ENCODE measurements at regions of chr6 and their contacts with region 1.

Region 1: GRCh38 chr6:36678518-36679027 is at the start of gene CDKN1A:
- DNase-seq: peak; percentile 95
- H3K4me3 Mint-ChIP-seq: peak within 1 kb of the TSS; percentile 97
- H3K27ac Mint-ChIP-seq: peak within 1 kb of the TSS; percentile 90
- H3K4me1 Mint-ChIP-seq: peaks cover 59% of the 10 kb centered on the region
- H3K27me3 Mint-ChIP-seq: no peaks in the 10 kb centered on the region
- total RNA-seq, gene CDKN1A: 77.8 and 82.7 TPM in 2 replicates

Region 2: DNA sequence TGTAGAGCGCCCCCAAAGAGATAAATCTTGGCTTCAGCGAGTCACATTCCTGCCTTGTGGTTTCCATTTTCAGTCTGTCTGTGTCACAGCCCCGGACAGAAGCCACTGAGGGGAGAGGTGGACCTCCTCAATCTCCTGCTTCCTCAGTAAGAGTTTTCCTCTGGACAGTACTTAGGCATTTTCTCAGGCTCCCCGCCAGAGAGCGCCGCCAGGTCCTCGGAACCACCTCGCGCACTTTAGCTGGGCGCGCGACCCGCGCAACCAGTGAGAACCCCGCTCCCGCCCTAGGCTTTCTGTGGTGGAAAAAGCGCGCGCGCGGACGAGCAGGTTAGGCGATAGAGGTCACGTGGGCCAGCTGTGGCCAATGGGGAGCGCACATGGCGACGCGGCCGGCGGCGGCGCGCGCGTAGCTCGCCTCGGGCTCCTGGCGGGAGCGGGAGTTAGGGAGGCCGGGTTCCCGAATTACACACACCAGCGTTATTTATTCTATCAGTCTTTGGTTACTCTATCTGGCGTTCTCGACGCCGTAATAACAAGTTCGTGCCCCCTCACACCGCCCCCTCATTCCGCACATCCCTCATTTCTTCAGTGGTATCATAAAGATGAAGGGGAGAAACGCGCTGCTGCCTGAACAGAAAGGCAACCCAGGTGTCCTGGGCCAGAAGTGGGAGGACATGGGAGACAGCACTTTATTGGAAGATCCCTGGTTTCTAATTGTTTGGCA is 255.3 kb before region 1 on chr6:
- intact Hi-C with region 1: loop called (anchors 1 kb)
- DNase-seq: peak; percentile 99
- H3K4me3 Mint-ChIP-seq: peak overlapping the region; percentile 88
- H3K27ac Mint-ChIP-seq: peak overlapping the region; percentile 87
- H3K4me1 Mint-ChIP-seq: peaks cover 15% of the 10 kb centered on the region
- H3K27me3 Mint-ChIP-seq: peaks cover 5% of the 10 kb centered on the region

Region 3: DNA sequence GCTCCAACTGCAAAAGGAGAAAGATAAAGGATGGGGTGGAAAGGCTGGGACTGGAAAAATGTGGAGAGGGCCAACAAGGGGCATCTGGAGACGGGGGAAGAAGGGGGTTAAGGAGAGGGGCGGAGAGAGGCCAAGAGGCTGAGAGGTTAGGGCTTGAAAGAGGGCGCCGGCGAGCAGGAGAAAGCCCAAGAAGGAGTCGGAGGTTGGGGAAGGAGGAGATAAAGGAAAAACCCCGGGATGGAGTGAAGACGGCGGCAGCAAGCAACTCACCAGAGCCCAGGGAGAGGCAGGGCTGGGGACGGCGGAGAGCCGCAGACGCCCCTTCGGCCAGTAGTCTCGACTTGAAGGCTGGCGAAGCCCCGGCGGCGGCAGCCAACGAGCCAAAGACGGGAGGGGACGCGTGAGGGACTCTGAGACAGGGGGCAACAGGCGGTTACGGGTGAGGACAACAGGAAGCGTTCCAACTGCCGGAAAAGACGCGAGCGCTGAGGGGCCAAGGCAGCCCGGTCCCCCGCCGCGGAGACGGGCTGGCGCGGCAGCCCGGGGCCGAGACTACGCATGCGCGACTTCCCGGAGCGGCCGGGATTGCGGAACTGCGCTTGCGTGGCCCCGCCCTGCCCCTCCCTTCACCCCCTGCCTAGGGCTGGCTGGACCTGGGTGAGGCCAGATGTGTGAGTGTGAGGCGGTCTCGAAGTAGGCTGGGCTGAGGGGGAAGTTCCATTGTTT is 131.5 kb before region 1 on chr6 and contains the start of gene STK38:
- intact Hi-C with region 1: loop called (anchors 1 kb)
- DNase-seq: peak; percentile 96
- H3K4me3 Mint-ChIP-seq: peak within 1 kb of the TSS; percentile 94
- H3K27ac Mint-ChIP-seq: peak within 1 kb of the TSS; percentile 92
- H3K4me1 Mint-ChIP-seq: peaks cover 37% of the 10 kb centered on the region
- H3K27me3 Mint-ChIP-seq: no peaks in the 10 kb centered on the region
- total RNA-seq, gene STK38: 20.7 and 21.5 TPM in 2 replicates

Region 4: DNA sequence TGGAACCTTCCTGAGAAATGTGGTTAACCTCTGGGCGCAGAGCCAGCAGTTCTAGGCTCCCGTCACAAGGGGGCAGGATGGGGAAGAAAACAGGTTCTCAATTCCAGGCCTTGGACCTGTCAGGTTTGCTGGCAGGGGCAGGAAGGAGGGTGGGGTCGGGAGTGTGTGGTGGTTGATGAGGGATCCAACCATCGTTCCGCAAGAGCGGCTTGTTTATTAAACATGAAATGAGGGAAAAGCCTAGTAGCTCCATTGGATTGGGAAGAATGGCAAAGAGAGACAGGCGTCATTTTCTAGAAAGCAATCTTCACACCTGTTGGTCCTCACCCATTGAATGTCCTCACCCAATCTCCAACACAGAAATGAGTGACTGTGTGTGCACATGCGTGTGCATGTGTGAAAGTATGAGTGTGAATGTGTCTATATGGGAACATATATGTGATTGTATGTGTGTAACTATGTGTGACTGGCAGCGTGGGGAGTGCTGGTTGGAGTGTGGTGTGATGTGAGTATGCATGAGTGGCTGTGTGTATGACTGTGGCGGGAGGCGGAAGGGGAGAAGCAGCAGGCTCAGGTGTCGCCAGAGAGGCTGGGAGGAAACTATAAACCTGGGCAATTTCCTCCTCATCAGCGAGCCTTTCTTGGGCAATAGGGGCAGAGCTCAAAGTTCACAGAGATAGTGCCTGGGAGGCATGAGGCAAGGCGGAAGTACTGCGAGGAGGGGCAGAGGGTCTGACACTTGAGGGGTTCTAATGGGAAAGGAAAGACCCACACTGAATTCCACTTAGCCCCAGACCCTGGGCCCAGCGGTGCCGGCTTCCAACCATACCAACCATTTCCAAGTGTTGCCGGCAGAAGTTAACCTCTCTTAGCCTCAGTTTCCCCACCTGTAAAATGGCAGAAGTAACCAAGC is 54.8 kb before region 1 on chr6:
- intact Hi-C with region 1: loop called (anchors 1 kb)
- DNase-seq: peak; percentile 94
- H3K4me3 Mint-ChIP-seq: no peak overlapping the region
- H3K27ac Mint-ChIP-seq: peak overlapping the region; percentile 62
- H3K4me1 Mint-ChIP-seq: peaks cover 25% of the 10 kb centered on the region
- H3K27me3 Mint-ChIP-seq: no peaks in the 10 kb centered on the region

Region 5: GRCh38 chr6:36724514-36725390 is 46.2 kb after region 1 on chr6:
- intact Hi-C with region 1: loop called (anchors 5 kb)
- DNase-seq: peak; percentile 84
- H3K4me3 Mint-ChIP-seq: no peak overlapping the region
- H3K27ac Mint-ChIP-seq: no peak overlapping the region
- H3K4me1 Mint-ChIP-seq: peaks cover 33% of the 10 kb centered on the region
- H3K27me3 Mint-ChIP-seq: peaks cover 2% of the 10 kb centered on the region

Region 6: DNA sequence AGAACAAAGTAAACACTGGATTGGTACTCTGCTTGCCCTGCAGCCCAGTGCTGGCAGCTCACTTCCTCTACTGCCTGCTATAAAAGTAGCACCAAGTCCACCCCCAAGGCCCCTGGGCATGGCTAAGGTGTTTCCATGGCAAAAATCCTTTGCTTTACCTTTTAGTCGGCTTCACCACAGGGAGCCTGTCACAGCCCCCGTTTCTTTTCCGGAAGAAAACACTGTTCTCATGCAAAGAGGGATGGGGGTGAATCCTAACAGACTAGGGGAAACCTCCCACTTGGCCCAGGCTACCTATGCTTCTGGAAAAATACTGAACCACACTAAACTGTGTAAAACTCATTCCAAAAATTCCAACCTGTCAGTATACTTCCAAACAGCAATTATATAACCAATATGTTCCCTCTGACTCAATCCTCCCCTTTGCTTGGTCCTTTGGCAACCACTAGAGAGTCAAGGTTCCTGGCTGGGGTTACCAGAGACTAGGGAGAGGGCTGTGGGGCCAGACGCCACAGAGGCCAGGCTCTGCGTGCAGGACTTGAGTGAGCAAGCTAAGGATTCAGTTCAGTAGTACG is 179.9 kb after region 1 on chr6:
- intact Hi-C with region 1: no loop called
- DNase-seq: no peak
- H3K4me3 Mint-ChIP-seq: no peak overlapping the region
- H3K27ac Mint-ChIP-seq: no peak overlapping the region
- H3K4me1 Mint-ChIP-seq: peaks cover 21% of the 10 kb centered on the region
- H3K27me3 Mint-ChIP-seq: no peaks in the 10 kb centered on the region